ENCODE measurements at regions of chr6 and their contacts with region 1.

Region 1: GRCh38 chr6:146357578-146358430 is 185.8 kb upstream of the RAB32 start:
- DNase-seq: peak; percentile 91
- H3K4me3 ChIP-seq: peak overlapping the region in 1 of 3 experiments; percentile 28
- H3K27ac ChIP-seq: peak overlapping the region; percentile 99
- H3K4me1 ChIP-seq: peaks cover 54% of the 10 kb centered on the region
- H3K27me3 ChIP-seq: no peaks in the 10 kb centered on the region
- CTCF ChIP-seq: no peak
- POLR2A ChIP-seq: no peak

Region 2: GRCh38 chr6:145814501-145815308 is 543.1 kb before region 1 on chr6 and contains the start of gene FBXO30:
- CTCF ChIA-PET with region 1: no interaction called
- POLR2A ChIA-PET with region 1: no interaction called
- dilution Hi-C with region 1: no loop called
- intact Hi-C with region 1: loop called (anchors 10 kb)
- DNase-seq: peak; percentile 95
- H3K4me3 ChIP-seq: peak within 1 kb of the TSS; percentile 56 to 95 (median 90)
- H3K27ac ChIP-seq: peak within 1 kb of the TSS; percentile 83
- H3K4me1 ChIP-seq: peaks cover 28% of the 10 kb centered on the region
- H3K27me3 ChIP-seq: no peaks in the 10 kb centered on the region
- CTCF ChIP-seq: no peak
- POLR2A ChIP-seq: peak; percentile 71
- total RNA-seq, gene FBXO30: 10.4 and 11.1 TPM in 2 replicates

Region 3: GRCh38 chr6:146047371-146047770 is 310.4 kb before region 1 on chr6:
- CTCF ChIA-PET with region 1: no interaction called
- POLR2A ChIA-PET with region 1: no interaction called
- dilution Hi-C with region 1: no loop called
- intact Hi-C with region 1: loop called (anchors 1 kb)
- DNase-seq: no peak
- H3K4me3 ChIP-seq: no peak overlapping the region
- H3K27ac ChIP-seq: no peak overlapping the region
- H3K4me1 ChIP-seq: peaks cover 3% of the 10 kb centered on the region
- H3K27me3 ChIP-seq: no peaks in the 10 kb centered on the region
- CTCF ChIP-seq: no peak
- POLR2A ChIP-seq: no peak

Region 4: DNA sequence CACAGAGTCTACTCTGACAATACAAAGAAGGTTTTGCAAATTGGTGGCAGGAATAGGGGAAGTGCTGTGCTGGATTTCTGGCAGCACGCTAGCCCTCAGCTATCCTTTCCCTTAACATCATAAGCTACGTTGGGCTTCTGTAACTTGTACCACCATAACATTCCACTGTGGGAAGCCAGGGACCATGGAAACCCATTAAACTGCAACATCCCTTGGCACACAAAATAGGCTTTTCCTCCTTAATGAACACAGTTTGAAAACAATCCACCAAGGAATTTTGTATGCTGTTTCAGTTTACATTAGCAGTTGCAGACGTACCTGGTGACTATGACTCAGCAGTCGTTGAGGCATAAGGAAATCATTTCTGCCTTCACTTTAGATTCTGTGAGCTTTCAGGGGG is 18.1 kb before region 1 on chr6:
- CTCF ChIA-PET with region 1: interaction called, 8 read pairs
- POLR2A ChIA-PET with region 1: interaction called, 4 read pairs
- dilution Hi-C with region 1: no loop called
- intact Hi-C with region 1: loop called (anchors 1 kb)
- DNase-seq: peak; percentile 71
- H3K4me3 ChIP-seq: no peak overlapping the region
- H3K27ac ChIP-seq: no peak overlapping the region
- H3K4me1 ChIP-seq: peaks cover 28% of the 10 kb centered on the region
- H3K27me3 ChIP-seq: no peaks in the 10 kb centered on the region
- CTCF ChIP-seq: no peak
- POLR2A ChIP-seq: no peak

Region 5: GRCh38 chr6:146913842-146914488 is 556.2 kb after region 1 on chr6:
- CTCF ChIA-PET with region 1: no interaction called
- POLR2A ChIA-PET with region 1: no interaction called
- dilution Hi-C with region 1: no loop called
- intact Hi-C with region 1: loop called (anchors 10 kb)
- DNase-seq: peak; percentile 98
- H3K4me3 ChIP-seq: peak overlapping the region in 2 of 3 experiments; percentile 10 to 45
- H3K27ac ChIP-seq: peak overlapping the region; percentile 99
- H3K4me1 ChIP-seq: peaks cover 39% of the 10 kb centered on the region
- H3K27me3 ChIP-seq: no peaks in the 10 kb centered on the region
- CTCF ChIP-seq: no peak
- POLR2A ChIP-seq: no peak

Measured in endothelial cell of umbilical vein (primary cell).